ENCODE measurements at regions of chr5 and their contacts with region 1.

Region 1: GRCh38 chr5:1105350-1106265 is 6.3 kb downstream of the SLC12A7 start:
- DNase-seq: no peak
- ATAC-seq: no peak
- H3K4me3 ChIP-seq: peak overlapping the region; percentile 78 to 90; a peak in 3 of 4 replicates
- H3K27ac ChIP-seq: peak overlapping the region; percentile 100
- H3K4me1 ChIP-seq: peaks cover 72% of the 10 kb centered on the region
- H3K27me3 ChIP-seq: no peaks in the 10 kb centered on the region
- CTCF ChIP-seq: no peak

Region 2: GRCh38 chr5:657570-657969 is 448.0 kb before region 1 on chr5:
- CTCF ChIA-PET with region 1: no interaction called
- POLR2A ChIA-PET with region 1: interaction called, 10 read pairs
- in situ Hi-C with region 1: no loop called
- intact Hi-C with region 1: no loop called
- DNase-seq: peak; percentile 97
- ATAC-seq: peak; percentile 99
- H3K4me3 ChIP-seq: peak overlapping the region in 1 of 2 experiments; percentile 6; a peak in 1 of 4 replicates
- H3K27ac ChIP-seq: peak overlapping the region; percentile 80
- H3K4me1 ChIP-seq: peaks cover 15% of the 10 kb centered on the region
- H3K27me3 ChIP-seq: no peaks in the 10 kb centered on the region
- CTCF ChIP-seq: no peak

Region 3: DNA sequence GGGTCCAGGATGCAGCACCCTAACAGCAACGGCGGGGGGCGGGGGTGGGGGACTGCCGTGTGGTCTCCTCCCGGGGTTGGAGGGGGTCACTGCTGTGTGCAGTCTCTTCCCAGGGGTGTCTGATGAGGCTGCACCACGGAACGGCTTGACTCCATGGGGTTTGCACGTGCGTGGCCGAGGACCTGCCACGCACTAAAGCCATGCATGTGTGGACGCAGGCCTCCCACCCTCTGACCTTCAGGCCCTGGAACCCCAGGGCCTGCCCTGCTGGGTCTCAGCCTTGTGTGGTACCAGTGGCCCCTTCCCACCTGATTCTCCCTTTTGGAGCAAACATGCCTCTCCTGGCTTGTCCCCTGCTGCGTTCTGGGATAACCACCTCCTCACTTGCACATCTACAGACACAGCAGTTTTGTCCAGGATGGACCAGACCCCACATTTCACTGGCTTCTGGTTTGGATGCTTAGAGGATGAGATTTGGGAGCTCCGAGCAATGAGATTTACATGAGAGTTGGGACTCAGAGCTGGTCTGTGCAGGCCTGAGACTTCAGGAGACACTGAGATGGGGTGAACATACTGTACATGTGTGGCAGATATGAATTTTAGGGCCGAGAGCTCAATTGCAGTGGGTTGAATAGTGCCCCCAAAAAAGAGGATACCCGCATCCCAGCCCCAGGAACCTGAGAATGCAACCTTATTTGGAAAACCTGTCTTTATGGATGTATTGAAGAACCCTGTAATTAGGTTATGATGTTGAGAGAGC is 39.5 kb before region 1 on chr5:
- CTCF ChIA-PET with region 1: no interaction called
- POLR2A ChIA-PET with region 1: interaction called, 10 read pairs
- in situ Hi-C with region 1: no loop called
- intact Hi-C with region 1: no loop called
- DNase-seq: no peak
- ATAC-seq: no peak
- H3K4me3 ChIP-seq: no peak overlapping the region
- H3K27ac ChIP-seq: no peak overlapping the region; the same call in 1 of the 2 replicates
- H3K4me1 ChIP-seq: no peaks in the 10 kb centered on the region
- H3K27me3 ChIP-seq: no peaks in the 10 kb centered on the region
- CTCF ChIP-seq: no peak

Region 4: GRCh38 chr5:1140171-1140817 is 34.7 kb after region 1 on chr5:
- CTCF ChIA-PET with region 1: interaction called, 9 read pairs
- POLR2A ChIA-PET with region 1: no interaction called
- in situ Hi-C with region 1: no loop called
- intact Hi-C with region 1: loop called (anchors 5 kb)
- DNase-seq: peak; percentile 51
- ATAC-seq: peak; percentile 84
- H3K4me3 ChIP-seq: peak overlapping the region in 1 of 2 experiments; percentile 15; a peak in 1 of 4 replicates
- H3K27ac ChIP-seq: peak overlapping the region; percentile 84
- H3K4me1 ChIP-seq: peaks cover 66% of the 10 kb centered on the region
- H3K27me3 ChIP-seq: no peaks in the 10 kb centered on the region
- CTCF ChIP-seq: peak; percentile 98